ENCODE measurements at regions of chr14 and their contacts with region 1.

Region 1: DNA sequence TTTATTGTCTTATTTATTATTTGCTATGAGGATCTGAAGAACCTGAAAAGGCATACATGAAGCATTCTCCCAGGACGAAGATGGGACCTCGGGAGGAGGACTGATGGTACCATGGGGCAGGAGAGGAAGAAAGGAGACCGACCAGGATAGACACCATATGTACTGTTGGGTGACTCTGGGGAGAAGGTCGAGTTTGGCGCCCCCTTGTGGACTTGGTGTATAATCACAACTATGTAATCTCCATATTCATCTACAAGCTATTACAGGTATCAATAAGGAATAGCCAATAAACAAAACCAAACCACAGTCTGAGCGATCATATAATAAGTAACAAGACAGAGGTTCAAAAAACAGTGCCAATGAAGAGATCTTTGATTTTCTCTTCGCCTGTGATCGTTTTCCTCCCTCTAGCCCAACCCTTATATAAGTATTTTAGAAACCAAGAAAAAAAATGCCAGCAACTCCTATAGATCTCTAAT is 139.1 kb downstream of the SPTSSA start:
- DNase-seq: peak; percentile 37 to 78 (median 69)
- ATAC-seq: no peak
- H3K4me3 ChIP-seq: no peak overlapping the region
- H3K4me3 Mint-ChIP-seq: no peak overlapping the region
- H3K27ac ChIP-seq: no peak overlapping the region
- H3K27ac Mint-ChIP-seq: no peak overlapping the region
- H3K4me1 ChIP-seq: no peaks in the 10 kb centered on the region
- H3K4me1 Mint-ChIP-seq: no peaks in the 10 kb centered on the region
- H3K27me3 ChIP-seq: no peaks in the 10 kb centered on the region
- H3K27me3 Mint-ChIP-seq: peaks cover 3% of the 10 kb centered on the region
- CTCF ChIP-seq: peak; percentile 76

Region 2: GRCh38 chr14:34300882-34301734 is 21.9 kb before region 1 on chr14:
- CTCF ChIA-PET with region 1: interaction called, 13 read pairs
- POLR2A ChIA-PET with region 1: no interaction called
- intact Hi-C with region 1: no loop called
- DNase-seq: peak in 2 of 9 experiments; percentile 27 to 31
- ATAC-seq: no peak
- H3K4me3 ChIP-seq: no peak overlapping the region
- H3K4me3 Mint-ChIP-seq: no peak overlapping the region
- H3K27ac ChIP-seq: no peak overlapping the region
- H3K27ac Mint-ChIP-seq: no peak overlapping the region
- H3K4me1 ChIP-seq: no peaks in the 10 kb centered on the region
- H3K4me1 Mint-ChIP-seq: no peaks in the 10 kb centered on the region
- H3K27me3 ChIP-seq: no peaks in the 10 kb centered on the region
- H3K27me3 Mint-ChIP-seq: peaks cover 5% of the 10 kb centered on the region
- CTCF ChIP-seq: no peak

Measured in CD8-positive, alpha-beta T cell (primary cell).